B cell (primary cell): ENCODE measurements at regions of chr15 and their contacts with region 1.

Region 1: GRCh38 chr15:32908135-32908801 is 190.5 kb downstream of the GREM1 start:
- DNase-seq: peak; percentile 81
- ATAC-seq: peak; percentile 90
- H3K4me3 ChIP-seq: peak overlapping the region; percentile 14 to 58 (median 35)
- H3K4me3 Mint-ChIP-seq: peak overlapping the region; percentile 68
- H3K27ac ChIP-seq: peak overlapping the region; percentile 52 to 54
- H3K27ac Mint-ChIP-seq: peak overlapping the region; percentile 72
- H3K4me1 ChIP-seq: peaks cover 56 to 61% of the 10 kb centered on the region in 2 donors
- H3K4me1 Mint-ChIP-seq: peaks cover 70% of the 10 kb centered on the region
- H3K27me3 ChIP-seq: no peaks in the 10 kb centered on the region
- H3K27me3 Mint-ChIP-seq: no peaks in the 10 kb centered on the region
- CTCF ChIP-seq: no peak

Region 2: GRCh38 chr15:32834156-32834555 is 74.1 kb before region 1 on chr15:
- CTCF ChIA-PET with region 1: interaction called, 3 read pairs
- POLR2A ChIA-PET with region 1: no interaction called
- intact Hi-C with region 1: loop called (anchors 2 kb)
- DNase-seq: peak; percentile 63
- ATAC-seq: peak; percentile 99
- H3K4me3 ChIP-seq: no peak overlapping the region
- H3K4me3 Mint-ChIP-seq: peak overlapping the region; percentile 33
- H3K27ac ChIP-seq: no peak overlapping the region
- H3K27ac Mint-ChIP-seq: peak overlapping the region; percentile 12
- H3K4me1 ChIP-seq: peaks cover 10 to 13% of the 10 kb centered on the region in 2 donors
- H3K4me1 Mint-ChIP-seq: peaks cover 16% of the 10 kb centered on the region
- H3K27me3 ChIP-seq: peaks cover 0 to 3% (median 1%) of the 10 kb centered on the region in 4 experiments
- H3K27me3 Mint-ChIP-seq: peaks cover 21% of the 10 kb centered on the region
- CTCF ChIP-seq: no peak

Region 3: GRCh38 chr15:32870240-32871033 is 37.8 kb before region 1 on chr15:
- CTCF ChIA-PET with region 1: interaction called, 3 read pairs
- POLR2A ChIA-PET with region 1: interaction called, 3 read pairs
- intact Hi-C with region 1: loop called (anchors 1 kb)
- DNase-seq: peak; percentile 67
- ATAC-seq: peak; percentile 92
- H3K4me3 ChIP-seq: no peak overlapping the region
- H3K4me3 Mint-ChIP-seq: peak overlapping the region; percentile 32
- H3K27ac ChIP-seq: no peak overlapping the region
- H3K27ac Mint-ChIP-seq: peak overlapping the region; percentile 73
- H3K4me1 ChIP-seq: peaks cover 0 to 3% of the 10 kb centered on the region in 2 donors
- H3K4me1 Mint-ChIP-seq: peaks cover 19% of the 10 kb centered on the region
- H3K27me3 ChIP-seq: no peaks in the 10 kb centered on the region
- H3K27me3 Mint-ChIP-seq: no peaks in the 10 kb centered on the region
- CTCF ChIP-seq: no peak

Region 4: GRCh38 chr15:32919749-32920414 is 11.6 kb after region 1 on chr15:
- CTCF ChIA-PET with region 1: interaction called, 12 read pairs
- POLR2A ChIA-PET with region 1: interaction called, 3 read pairs
- intact Hi-C with region 1: no loop called
- DNase-seq: peak; percentile 23
- ATAC-seq: peak; percentile 28
- H3K4me3 ChIP-seq: no peak overlapping the region
- H3K4me3 Mint-ChIP-seq: peak overlapping the region; percentile 2
- H3K27ac ChIP-seq: no peak overlapping the region
- H3K27ac Mint-ChIP-seq: no peak overlapping the region
- H3K4me1 ChIP-seq: peaks cover 11 to 13% of the 10 kb centered on the region in 2 donors
- H3K4me1 Mint-ChIP-seq: peaks cover 16% of the 10 kb centered on the region
- H3K27me3 ChIP-seq: no peaks in the 10 kb centered on the region
- H3K27me3 Mint-ChIP-seq: peaks cover 8% of the 10 kb centered on the region
- CTCF ChIP-seq: no peak

Region 5: GRCh38 chr15:32936283-32936918 is 28.1 kb after region 1 on chr15:
- CTCF ChIA-PET with region 1: interaction called, 21 read pairs
- POLR2A ChIA-PET with region 1: no interaction called
- intact Hi-C with region 1: no loop called
- DNase-seq: peak; percentile 40
- ATAC-seq: peak; percentile 43
- H3K4me3 ChIP-seq: no peak overlapping the region
- H3K4me3 Mint-ChIP-seq: no peak overlapping the region
- H3K27ac ChIP-seq: no peak overlapping the region
- H3K27ac Mint-ChIP-seq: no peak overlapping the region
- H3K4me1 ChIP-seq: no peaks in the 10 kb centered on the region
- H3K4me1 Mint-ChIP-seq: no peaks in the 10 kb centered on the region
- H3K27me3 ChIP-seq: peaks cover 0 to 8% (median 1%) of the 10 kb centered on the region in 4 experiments
- H3K27me3 Mint-ChIP-seq: peaks cover 55% of the 10 kb centered on the region
- CTCF ChIP-seq: peak; percentile 47